Right ventricle myocardium inferior (tissue), 1 donor: ENCODE measurements at regions of chr3 and their contacts with region 1.

Region 1: GRCh38 chr3:46866720-46867549 is 3.7 kb upstream of the MYL3 start:
- DNase-seq: peak; percentile 92
- ATAC-seq: peak; percentile 37

Region 2: DNA sequence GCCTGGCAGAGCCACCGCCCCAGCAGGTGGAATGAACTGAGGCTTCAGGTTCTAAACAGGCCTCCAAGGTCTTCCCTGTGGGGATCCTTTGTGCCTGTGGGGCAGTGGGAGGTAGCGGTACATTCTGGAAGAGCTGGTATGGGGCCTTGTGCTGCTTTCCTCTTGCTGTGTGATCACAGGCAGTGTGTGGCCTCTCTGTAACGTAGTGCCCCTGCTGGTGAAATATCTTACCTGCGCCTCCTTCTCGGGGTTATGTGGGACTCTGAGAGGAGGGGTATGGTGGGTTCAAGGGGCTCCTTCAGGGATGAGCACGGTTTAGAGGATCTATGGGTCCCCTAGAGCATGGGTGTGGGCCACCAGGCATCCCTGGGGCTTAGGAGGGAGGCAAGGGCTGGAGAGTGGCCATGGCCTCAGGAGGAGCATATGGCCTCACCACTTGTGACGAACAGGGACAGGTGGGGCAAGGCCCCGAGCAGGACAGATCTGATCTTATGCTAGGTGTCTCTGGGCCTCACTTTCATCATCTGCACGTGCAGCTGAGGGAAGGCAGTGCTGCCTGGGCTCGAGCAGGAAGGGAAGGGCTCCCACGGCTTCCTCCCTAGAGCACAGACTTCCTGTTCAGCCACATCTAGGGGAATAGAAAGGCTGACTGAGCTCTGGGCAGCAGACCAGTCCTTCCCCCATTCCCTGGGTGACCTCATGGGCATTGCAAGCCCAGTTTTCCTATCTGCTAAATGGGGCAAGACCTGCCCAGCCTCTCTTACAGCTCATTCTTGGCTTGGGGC is 171.6 kb before region 1 on chr3:
- intact Hi-C with region 1: loop called (anchors 2 kb)
- DNase-seq: peak; percentile 84
- ATAC-seq: peak; percentile 16

Region 3: DNA sequence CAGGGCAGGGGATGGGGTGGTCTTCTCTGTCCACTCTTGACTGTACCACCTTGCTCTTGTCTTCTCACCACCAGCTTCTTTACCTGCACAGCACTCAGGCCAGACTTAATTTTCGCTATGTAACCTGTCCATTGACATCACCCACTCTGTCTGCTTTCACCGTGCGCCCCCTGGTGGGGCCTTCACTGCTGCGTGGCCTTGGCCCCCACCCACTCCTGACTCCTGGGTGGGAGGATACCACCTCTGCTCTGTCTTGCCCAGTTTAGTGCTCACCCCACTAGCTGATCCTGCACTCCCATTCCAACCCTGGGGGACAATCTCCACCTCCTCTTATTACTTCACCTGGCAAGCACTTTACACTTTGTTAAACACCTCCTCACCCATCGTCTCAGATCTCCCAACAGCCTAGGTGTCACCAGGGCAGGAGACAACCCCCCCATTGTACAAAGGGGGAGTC is 28.3 kb after region 1 on chr3:
- intact Hi-C with region 1: loop called (anchors 1 kb)
- DNase-seq: peak; percentile 87
- ATAC-seq: peak; percentile 54

Region 4: DNA sequence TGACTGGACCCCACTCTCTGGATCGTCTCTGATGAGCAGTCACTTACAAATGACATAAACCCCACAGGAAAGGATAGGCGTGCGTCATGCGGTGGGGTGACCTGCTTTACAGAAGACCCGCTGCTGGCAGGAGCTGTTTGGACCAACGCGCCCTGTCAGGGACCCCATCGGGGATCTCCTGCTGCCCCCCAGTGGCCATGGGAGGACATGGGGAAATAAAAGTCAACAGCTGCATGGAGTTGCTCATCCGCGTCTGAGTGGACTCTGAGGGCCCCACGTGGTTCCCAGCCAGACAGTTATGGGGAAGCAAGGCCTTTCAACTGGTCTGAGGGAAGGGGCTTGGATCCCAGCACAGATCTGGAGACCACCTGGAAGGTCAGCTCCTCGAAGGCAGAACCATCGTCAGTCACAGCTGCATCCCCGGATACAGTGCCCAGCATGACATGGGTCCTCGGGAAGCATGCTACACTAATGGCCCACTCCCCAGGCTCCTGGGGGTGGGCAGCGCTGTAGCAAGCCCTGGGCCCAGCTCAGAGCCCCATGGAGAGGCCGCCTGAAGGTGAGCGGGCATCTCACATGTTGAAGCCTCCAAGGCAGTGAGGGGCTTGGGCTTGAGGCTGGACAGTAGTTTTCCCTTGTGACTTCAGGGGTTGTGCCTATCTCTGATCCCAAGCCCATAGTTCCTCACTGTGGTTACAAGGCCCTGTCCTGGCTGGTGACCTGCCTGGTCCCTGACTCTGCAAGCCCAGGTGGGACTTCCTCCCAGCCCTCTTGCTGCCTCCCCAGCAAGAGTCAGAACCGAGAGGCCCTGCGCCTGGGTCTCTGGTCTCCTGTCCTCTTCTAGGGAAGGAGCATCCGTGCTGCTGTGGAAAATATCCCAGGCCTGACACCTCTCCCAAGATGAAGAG is 42.9 kb after region 1 on chr3:
- intact Hi-C with region 1: loop called (anchors 5 kb)
- DNase-seq: peak; percentile 88
- ATAC-seq: peak; percentile 84

Region 5: DNA sequence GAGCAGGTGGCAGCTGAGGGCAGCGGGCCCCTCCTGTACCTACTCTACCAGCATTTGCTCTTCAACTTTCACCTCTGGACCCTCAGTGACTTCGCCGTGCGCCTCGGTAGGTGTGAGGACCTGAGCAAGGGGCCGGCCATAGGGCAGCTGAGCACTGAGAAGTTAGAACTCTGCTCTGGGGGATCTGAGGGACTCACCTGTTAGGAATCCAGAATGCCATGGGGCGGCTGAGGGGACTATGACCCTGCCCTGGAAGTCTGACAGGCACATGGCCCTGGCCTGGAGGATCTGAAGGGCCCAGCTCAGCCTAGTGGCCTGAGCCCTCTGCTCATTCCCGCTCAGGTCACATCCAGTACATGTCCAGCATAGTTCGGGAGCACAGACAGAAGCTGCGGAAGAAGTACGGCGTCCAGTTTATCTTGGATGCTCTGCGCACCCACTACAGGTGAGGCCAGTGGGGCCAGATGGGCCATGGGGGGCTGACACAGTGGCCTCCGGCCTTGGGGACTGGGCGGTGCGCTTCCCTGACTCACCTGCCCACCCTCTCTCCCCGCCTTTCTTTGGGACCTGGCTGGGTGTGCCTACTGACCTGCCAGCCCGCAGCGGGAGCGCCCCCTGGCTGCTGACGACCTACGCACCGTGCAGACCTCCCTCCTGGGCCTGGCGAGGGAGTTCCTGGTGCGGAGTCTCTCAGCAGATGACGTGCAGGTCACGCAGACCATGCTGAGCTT is 131.4 kb after region 1 on chr3:
- intact Hi-C with region 1: no loop called
- DNase-seq: peak; percentile 89
- ATAC-seq: peak; percentile 73